A673 (cell line): ENCODE measurements at regions of chr16 and their contacts with region 1.

Region 1: GRCh38 chr16:28823872-28824716 is 1.3 kb downstream of the ATXN2L start:
- DNase-seq: peak; percentile 99
- H3K4me3 ChIP-seq: peak overlapping the region; percentile 99
- H3K27ac ChIP-seq: peak overlapping the region; percentile 100
- H3K4me1 ChIP-seq: peaks cover 26% of the 10 kb centered on the region
- H3K27me3 ChIP-seq: no peaks in the 10 kb centered on the region
- CTCF ChIP-seq: peak; percentile 35; the same call in 1 of the 2 replicates

Region 2: GRCh38 chr16:27588052-27588451 is 1236.0 kb before region 1 on chr16:
- CTCF ChIA-PET with region 1: no interaction called
- POLR2A ChIA-PET with region 1: interaction called, 11 read pairs
- intact Hi-C with region 1: no loop called
- DNase-seq: no peak
- H3K4me3 ChIP-seq: no peak overlapping the region
- H3K27ac ChIP-seq: no peak overlapping the region
- H3K4me1 ChIP-seq: no peaks in the 10 kb centered on the region
- H3K27me3 ChIP-seq: no peaks in the 10 kb centered on the region
- CTCF ChIP-seq: no peak

Region 3: DNA sequence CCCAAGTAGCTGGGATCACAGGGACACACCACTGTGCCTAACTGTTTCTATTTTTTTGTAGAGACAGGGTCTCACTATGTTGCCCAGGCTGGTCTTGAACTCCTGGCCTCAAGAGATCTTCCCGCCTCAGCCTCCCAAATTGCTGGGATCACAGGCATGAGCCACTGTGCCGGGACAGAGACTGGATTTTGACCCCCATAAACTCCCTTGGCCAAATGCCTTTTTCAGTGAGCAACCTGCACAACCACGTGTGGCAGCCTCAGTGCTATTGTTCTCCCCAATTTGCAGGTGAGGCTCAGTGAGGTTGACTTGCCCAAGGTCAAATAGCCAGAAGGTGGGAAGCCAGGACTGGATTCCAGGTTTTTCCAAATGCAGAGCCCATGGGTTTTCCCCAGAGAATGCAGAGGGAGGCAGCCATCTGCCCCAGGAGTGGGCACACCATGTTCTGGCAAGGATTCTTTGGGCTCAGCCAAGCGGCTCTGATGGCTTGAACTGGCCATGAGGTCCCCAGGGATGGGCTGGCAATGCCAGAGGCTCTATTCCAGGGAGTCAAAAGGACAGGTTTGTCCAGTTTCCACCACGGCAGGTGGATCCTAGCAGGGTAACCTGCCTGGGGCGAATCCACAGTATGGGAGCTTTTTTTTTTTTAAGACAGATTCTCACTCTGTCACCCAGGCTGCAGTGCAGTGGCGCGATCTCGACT is 319.2 kb before region 1 on chr16:
- CTCF ChIA-PET with region 1: no interaction called
- POLR2A ChIA-PET with region 1: interaction called, 15 read pairs
- intact Hi-C with region 1: no loop called
- DNase-seq: no peak
- H3K4me3 ChIP-seq: no peak overlapping the region
- H3K27ac ChIP-seq: no peak overlapping the region
- H3K4me1 ChIP-seq: no peaks in the 10 kb centered on the region
- H3K27me3 ChIP-seq: peaks cover 11% of the 10 kb centered on the region
- CTCF ChIP-seq: no peak

Region 4: GRCh38 chr16:28846080-28846932 is 22.2 kb after region 1 on chr16 and contains the start of gene TUFM:
- CTCF ChIA-PET with region 1: no interaction called
- POLR2A ChIA-PET with region 1: no interaction called
- intact Hi-C with region 1: loop called (anchors 1 kb)
- DNase-seq: peak; percentile 99
- H3K4me3 ChIP-seq: peak within 1 kb of the TSS; percentile 97
- H3K27ac ChIP-seq: peak within 1 kb of the TSS; percentile 82
- H3K4me1 ChIP-seq: no peaks in the 10 kb centered on the region
- H3K27me3 ChIP-seq: no peaks in the 10 kb centered on the region
- CTCF ChIP-seq: peak; percentile 86
- total RNA-seq, gene TUFM: 228 and 244 TPM in 2 replicates

Region 5: DNA sequence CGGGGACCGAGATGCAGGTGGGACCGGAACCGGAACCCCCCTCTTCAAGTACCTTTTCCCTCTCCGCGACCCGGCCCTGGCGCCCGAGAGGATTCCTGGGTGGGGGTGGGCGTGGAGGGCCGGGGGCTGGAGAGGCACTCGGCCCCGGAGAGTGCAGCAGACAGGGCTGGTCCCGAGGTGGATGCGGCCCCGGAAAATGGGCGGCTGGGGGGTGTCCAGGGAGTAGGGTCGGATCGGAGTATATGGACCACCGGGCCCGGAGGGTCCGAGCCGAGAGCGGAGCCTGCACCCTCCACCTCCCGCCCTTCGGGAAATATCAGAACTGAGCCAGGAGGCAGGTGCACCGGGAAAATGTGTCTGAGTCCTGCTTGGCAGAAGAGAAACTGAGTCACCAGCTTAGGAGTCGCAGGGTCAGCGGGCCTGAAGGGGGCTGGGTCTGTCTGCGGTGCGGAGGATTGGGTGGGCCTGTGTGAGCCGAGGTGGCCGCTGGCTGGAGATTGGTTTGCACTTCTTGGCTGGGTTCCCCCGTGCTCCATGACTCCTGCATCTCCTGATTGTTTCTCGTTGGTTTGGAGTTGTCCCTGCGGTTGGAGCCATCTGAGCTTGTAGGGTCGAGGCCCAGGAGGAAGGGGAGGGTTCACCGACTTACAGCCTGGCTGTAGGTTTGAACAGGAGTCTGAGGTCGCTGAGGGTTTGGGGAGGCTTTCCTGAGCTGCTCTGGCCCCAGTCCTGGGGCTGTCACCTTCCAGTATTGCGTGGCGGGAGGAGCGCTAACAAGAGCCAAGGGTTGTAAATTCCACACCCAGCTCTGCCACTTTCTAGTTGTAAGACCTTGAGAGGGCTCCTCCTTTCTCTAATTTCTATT is 40.1 kb after region 1 on chr16:
- CTCF ChIA-PET with region 1: no interaction called
- POLR2A ChIA-PET with region 1: interaction called, 10 read pairs
- intact Hi-C with region 1: no loop called
- DNase-seq: no peak
- H3K4me3 ChIP-seq: peak overlapping the region; percentile 87
- H3K27ac ChIP-seq: peak overlapping the region; percentile 93
- H3K4me1 ChIP-seq: peaks cover 14% of the 10 kb centered on the region
- H3K27me3 ChIP-seq: no peaks in the 10 kb centered on the region
- CTCF ChIP-seq: no peak

Region 6: DNA sequence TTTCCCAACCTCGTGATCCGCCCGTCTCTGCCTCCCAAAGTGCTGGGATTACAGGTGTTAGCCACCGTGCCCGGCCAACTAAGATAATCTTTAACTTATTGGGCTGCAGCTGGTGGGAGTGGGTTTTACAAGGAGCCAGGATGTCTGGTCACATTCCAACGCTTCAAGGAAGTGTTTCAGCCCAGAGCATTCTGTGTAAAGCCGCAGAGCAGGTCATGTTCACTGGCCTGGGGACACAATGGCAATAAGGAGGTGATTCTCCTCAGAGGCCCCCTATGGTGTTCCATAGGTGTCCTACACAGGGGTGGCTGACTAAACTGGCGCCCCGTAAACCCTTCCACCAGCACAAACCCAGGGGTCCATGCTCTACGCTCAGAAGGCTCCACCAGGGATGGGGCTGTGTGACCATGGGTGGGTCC is 856.1 kb after region 1 on chr16:
- CTCF ChIA-PET with region 1: no interaction called
- POLR2A ChIA-PET with region 1: interaction called, 17 read pairs
- intact Hi-C with region 1: no loop called
- DNase-seq: no peak
- H3K4me3 ChIP-seq: peak overlapping the region; percentile 40
- H3K27ac ChIP-seq: no peak overlapping the region
- H3K4me1 ChIP-seq: peaks cover 17% of the 10 kb centered on the region
- H3K27me3 ChIP-seq: no peaks in the 10 kb centered on the region
- CTCF ChIP-seq: no peak

Region 7: DNA sequence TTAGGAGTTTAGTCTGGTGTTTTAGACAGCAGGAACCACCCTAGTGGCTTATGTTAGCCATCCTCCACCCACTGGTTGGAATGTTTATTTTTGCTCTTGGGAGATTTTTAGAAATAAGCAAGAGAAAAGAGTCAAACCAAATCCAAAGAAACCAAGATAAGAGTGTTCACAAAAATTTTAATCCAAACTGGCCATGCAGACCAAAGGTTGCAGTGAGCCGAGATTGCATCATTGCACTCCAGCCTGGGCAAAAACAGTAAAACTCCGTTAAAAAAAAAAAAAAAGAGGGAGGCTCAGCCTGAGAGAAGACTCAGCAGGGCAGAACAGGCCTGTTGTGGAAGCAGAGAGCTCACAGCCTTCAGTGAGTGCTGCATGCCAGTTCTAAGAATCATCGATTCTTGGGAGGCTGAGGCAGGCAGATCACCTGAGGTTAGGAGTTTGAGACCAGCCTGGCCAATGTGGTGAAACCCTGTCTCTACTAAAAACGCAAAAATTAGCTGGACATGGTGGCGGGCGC is 933.9 kb after region 1 on chr16:
- CTCF ChIA-PET with region 1: no interaction called
- POLR2A ChIA-PET with region 1: no interaction called
- intact Hi-C with region 1: no loop called
- DNase-seq: no peak
- H3K4me3 ChIP-seq: no peak overlapping the region
- H3K27ac ChIP-seq: no peak overlapping the region
- H3K4me1 ChIP-seq: no peaks in the 10 kb centered on the region
- H3K27me3 ChIP-seq: no peaks in the 10 kb centered on the region
- CTCF ChIP-seq: no peak